CD4-positive, alpha-beta T cell (primary cell): ENCODE measurements at regions of chr1 and their contacts with region 1.

Region 1: GRCh38 chr1:204499521-204500468 is 5.2 kb upstream of the PIK3C2B start:
- DNase-seq: no peak
- ATAC-seq: no peak
- H3K4me3 ChIP-seq: no peak overlapping the region
- H3K4me3 Mint-ChIP-seq: no peak overlapping the region
- H3K27ac ChIP-seq: no peak overlapping the region
- H3K27ac Mint-ChIP-seq: no peak overlapping the region
- H3K4me1 ChIP-seq: peaks cover 18% of the 10 kb centered on the region
- H3K4me1 Mint-ChIP-seq: peaks cover 29% of the 10 kb centered on the region
- H3K27me3 ChIP-seq: no peaks in the 10 kb centered on the region
- H3K27me3 Mint-ChIP-seq: peaks cover 3% of the 10 kb centered on the region
- CTCF ChIP-seq: no peak

Region 2: DNA sequence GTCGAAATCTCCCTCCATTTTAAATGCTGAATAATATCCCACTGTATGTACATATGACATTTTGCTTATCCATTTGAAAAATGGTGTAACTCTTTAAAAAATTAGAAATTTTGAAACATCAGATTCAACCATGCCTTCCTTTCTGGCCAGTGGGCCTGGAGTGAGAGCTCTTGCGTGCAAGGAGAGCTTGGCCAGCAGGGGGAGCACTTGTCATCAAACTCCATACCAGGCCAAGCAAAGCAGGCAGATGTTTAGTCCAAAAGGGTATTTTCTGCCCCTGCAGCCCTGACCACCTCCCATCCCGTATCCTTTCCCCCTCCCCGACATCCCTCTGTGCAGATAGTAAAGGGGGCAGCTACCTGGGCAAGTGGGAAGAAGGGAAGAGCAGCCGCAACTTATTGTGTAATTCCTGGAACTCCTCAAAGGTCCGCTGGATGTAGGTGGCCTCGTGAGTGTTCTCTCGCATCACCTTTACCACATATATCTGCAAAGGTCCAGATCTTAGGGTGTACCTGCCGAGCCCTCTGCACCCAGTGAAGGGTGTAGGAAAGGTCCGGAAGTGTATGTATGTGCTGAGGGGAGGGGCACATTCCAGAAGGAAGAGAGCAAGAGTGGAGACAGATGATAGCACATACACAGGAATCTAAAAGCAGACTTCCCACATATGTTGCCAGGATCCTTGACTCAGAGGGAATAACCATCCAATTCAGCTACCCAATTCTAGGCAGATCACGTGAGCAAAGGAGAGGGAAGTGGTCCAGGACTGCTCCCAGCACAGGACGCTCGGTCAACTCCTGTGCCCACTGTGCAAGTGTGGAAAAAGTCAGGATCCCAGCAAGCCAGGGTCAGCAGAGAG is 68.3 kb before region 1 on chr1:
- CTCF ChIA-PET with region 1: interaction called, 34 read pairs
- POLR2A ChIA-PET with region 1: interaction called, 14 read pairs
- intact Hi-C with region 1: loop called (anchors 1 kb)
- DNase-seq: peak; percentile 68 to 90 (median 76)
- ATAC-seq: peak; percentile 90
- H3K4me3 ChIP-seq: no peak overlapping the region
- H3K4me3 Mint-ChIP-seq: no peak overlapping the region
- H3K27ac ChIP-seq: no peak overlapping the region
- H3K27ac Mint-ChIP-seq: no peak overlapping the region
- H3K4me1 ChIP-seq: peaks cover 3% of the 10 kb centered on the region
- H3K4me1 Mint-ChIP-seq: no peaks in the 10 kb centered on the region
- H3K27me3 ChIP-seq: no peaks in the 10 kb centered on the region
- H3K27me3 Mint-ChIP-seq: no peaks in the 10 kb centered on the region
- CTCF ChIP-seq: peak; percentile 97